GM12878 (cell line): ENCODE measurements at regions of chr14 and their contacts with region 1.

Region 1: DNA sequence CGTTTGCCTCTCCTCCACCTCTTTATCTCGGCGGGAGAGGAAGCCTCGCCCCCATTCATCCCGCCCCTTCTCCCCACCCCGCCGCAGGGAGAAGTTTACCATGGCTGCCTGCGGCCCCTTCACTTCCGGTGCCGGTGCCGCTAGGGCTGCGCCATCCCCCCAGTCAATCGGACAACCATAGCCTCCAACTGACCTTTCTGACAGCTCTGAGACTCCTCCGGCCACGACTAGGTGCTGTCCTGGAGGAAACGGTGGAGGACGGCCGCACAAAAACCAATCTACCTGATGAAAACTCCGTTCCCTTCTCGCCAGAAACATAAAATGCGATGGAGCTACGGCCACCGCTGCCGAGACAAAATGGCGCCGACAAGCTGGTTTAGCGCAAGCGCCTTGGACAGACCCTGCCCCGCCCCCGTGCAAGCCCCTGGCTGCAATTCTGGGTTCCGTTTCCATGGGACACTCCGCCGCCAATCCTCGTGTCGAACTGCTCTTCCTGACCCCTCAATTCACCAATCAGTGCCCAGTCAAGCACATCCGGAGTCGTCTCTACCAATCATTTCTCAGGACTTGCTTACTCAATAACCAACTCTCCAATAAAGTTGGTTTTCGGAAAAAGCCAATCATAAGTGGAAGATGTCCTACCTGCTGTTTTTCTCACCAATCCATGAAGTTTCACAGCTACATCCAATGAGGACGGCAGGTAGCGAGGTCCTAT is 436 bp upstream of the ARID4A start:
- DNase-seq: peak; percentile 100
- ATAC-seq: peak; percentile 90
- H3K4me3 ChIP-seq: peak overlapping the region; percentile 92
- H3K27ac ChIP-seq: peak overlapping the region; percentile 97
- H3K4me1 ChIP-seq: 0 out of 2 replicates have a peak, but pooled peaks cover 3% of the 10 kb centered on the region
- H3K27me3 ChIP-seq: no peaks in the 10 kb centered on the region
- CTCF ChIP-seq: peak in 1 of 3 experiments; percentile 8; a peak in 1 of 6 replicates
- EP300 ChIP-seq: no peak
- POLR2A ChIP-seq: peak; percentile 85
- RAD21 ChIP-seq: no peak

Region 2: DNA sequence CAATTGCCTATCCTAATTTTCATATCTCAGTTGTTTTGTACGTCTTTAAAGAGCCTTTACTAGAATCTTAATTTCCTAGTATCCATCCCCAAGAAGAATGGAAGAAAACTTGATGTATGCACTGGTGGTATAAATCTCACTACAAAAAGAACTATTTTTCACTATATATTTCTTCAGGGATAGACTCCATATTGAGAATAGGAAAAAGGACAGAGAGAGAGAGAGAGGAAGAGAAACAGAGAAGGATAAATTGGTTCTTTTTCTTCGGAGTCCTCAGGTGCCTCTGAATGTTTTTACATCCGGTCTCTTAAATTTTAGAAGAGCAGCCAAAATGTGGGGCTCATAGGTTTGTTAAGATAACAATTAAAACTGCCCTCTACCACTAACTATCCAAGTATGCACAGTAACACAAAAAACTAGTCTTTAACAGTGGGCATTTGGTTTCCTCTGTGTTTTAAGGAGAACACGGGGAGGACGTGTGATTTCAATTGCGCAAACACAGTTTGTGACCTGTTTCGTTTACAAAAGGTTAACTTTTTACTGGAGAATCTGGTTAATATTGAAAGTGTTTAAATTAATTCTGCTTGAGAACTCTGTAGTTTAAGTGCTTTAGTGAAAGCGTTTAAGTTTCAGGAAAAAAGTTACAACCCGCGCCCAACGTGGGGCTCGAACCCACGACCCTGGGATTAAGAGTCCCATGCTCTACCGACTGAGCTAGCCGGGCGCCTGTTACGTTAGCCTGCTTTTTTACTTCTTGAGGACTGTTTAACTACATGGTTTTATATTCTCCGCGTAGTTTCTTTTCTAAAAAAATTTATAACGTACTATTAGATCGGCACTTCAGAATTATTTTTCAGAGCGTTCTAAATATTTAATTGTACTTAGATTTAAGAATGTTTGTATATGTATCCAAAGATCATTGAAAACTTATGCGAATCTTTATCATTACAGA is 58.4 kb before region 1 on chr14:
- CTCF ChIA-PET with region 1: interaction called, 4 read pairs
- POLR2A ChIA-PET with region 1: interaction called, 20 read pairs
- RAD21 ChIA-PET with region 1: interaction called, 17 read pairs
- SMC1A ChIA-PET with region 1: interaction called, 35 read pairs
- in situ Hi-C with region 1: no loop called
- intact Hi-C with region 1: loop called (anchors 2 kb)
- DNase-seq: peak; percentile 64
- ATAC-seq: peak; percentile 54
- H3K4me3 ChIP-seq: peak overlapping the region; percentile 78
- H3K27ac ChIP-seq: peak overlapping the region; percentile 70
- H3K4me1 ChIP-seq: peaks cover 2% of the 10 kb centered on the region; the same call in 1 of the 2 replicates
- H3K27me3 ChIP-seq: no peaks in the 10 kb centered on the region
- CTCF ChIP-seq: no peak
- EP300 ChIP-seq: peak in 1 of 2 experiments; percentile 74; a peak in 1 of 4 replicates
- POLR2A ChIP-seq: no peak
- RAD21 ChIP-seq: no peak

Region 3: GRCh38 chr14:58244556-58245387 is 53.1 kb before region 1 on chr14 and contains the start of gene PSMA3:
- CTCF ChIA-PET with region 1: interaction called, 6 read pairs
- POLR2A ChIA-PET with region 1: interaction called, 20 read pairs
- RAD21 ChIA-PET with region 1: interaction called, 17 read pairs
- SMC1A ChIA-PET with region 1: interaction called, 35 read pairs
- in situ Hi-C with region 1: no loop called
- intact Hi-C with region 1: loop called (anchors 2 kb)
- DNase-seq: peak; percentile 88
- ATAC-seq: peak; percentile 93
- H3K4me3 ChIP-seq: peak within 1 kb of the TSS; percentile 94
- H3K27ac ChIP-seq: peak within 1 kb of the TSS; percentile 99
- H3K4me1 ChIP-seq: no peaks in the 10 kb centered on the region; the same call in 1 of the 2 replicates
- H3K27me3 ChIP-seq: no peaks in the 10 kb centered on the region
- CTCF ChIP-seq: no peak
- EP300 ChIP-seq: peak in 1 of 2 experiments; percentile 27; a peak in 1 of 4 replicates
- POLR2A ChIP-seq: peak; percentile 93
- RAD21 ChIP-seq: no peak
- polyA plus RNA-seq, gene PSMA3: 813 to 936 TPM

Region 4: GRCh38 chr14:58427281-58428117 is 129.6 kb after region 1 on chr14 and contains the starts of genes KIAA0586 and TIMM9:
- CTCF ChIA-PET with region 1: interaction called, 3 read pairs
- POLR2A ChIA-PET with region 1: interaction called, 15 read pairs
- RAD21 ChIA-PET with region 1: interaction called, 14 read pairs
- SMC1A ChIA-PET with region 1: interaction called, 11 read pairs
- in situ Hi-C with region 1: no loop called
- intact Hi-C with region 1: loop called (anchors 2 kb)
- DNase-seq: peak; percentile 95
- ATAC-seq: peak; percentile 93
- H3K4me3 ChIP-seq: peak within 1 kb of the TSS; percentile 97
- H3K27ac ChIP-seq: peak within 1 kb of the TSS; percentile 99
- H3K4me1 ChIP-seq: no peaks in the 10 kb centered on the region
- H3K27me3 ChIP-seq: no peaks in the 10 kb centered on the region
- CTCF ChIP-seq: no peak
- EP300 ChIP-seq: peak; percentile 19 to 98; a peak in 2 of 4 replicates
- POLR2A ChIP-seq: peak; percentile 70
- RAD21 ChIP-seq: no peak
- polyA plus RNA-seq, gene KIAA0586: 7.1 to 10.0 TPM
- polyA plus RNA-seq, gene TIMM9: 81.3 to 88.3 TPM